ENCODE measurements at regions of chr20 and their contacts with region 1.

Region 1: DNA sequence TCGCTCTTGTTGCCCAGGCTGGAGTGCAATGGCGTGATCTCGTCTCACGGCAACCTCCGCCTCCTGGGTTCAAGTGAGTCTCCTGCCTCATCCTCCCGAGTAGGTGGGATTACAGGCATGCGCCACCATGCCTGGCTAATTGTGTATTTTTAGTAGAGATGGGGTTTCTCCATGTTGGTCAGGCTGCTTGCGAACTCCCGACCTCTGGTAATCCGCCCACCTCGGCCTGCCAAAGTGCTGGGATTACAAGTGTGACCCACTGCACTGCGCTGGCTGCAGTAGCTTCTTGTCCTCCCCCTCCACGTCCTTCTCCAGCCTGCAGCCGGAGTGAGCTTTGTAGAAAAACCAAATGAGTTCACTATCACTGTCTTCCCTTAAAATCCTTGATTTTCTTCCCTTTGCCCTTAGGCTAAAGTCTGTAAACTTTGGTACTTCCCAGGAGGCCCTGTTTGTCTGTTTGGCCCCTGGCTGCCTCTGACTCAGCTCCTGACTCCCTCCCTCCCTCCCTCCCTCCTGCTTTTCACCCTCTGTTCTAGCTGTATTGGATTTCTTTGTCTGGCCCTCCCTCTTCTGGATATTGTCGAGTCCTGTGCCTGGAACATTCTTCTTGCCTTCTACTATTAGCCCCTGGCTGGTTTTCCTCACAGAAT is 12.9 kb downstream of the PARD6B start:
- DNase-seq: peak; percentile 67 to 87
- ATAC-seq: peak; percentile 92 to 94 (median 93)
- H3K4me3 ChIP-seq: peak overlapping the region; percentile 26
- H3K27ac ChIP-seq: peak overlapping the region; percentile 92
- H3K4me1 ChIP-seq: peaks cover 21% of the 10 kb centered on the region
- H3K27me3 ChIP-seq: no peaks in the 10 kb centered on the region
- CTCF ChIP-seq: peak; percentile 16

Region 2: DNA sequence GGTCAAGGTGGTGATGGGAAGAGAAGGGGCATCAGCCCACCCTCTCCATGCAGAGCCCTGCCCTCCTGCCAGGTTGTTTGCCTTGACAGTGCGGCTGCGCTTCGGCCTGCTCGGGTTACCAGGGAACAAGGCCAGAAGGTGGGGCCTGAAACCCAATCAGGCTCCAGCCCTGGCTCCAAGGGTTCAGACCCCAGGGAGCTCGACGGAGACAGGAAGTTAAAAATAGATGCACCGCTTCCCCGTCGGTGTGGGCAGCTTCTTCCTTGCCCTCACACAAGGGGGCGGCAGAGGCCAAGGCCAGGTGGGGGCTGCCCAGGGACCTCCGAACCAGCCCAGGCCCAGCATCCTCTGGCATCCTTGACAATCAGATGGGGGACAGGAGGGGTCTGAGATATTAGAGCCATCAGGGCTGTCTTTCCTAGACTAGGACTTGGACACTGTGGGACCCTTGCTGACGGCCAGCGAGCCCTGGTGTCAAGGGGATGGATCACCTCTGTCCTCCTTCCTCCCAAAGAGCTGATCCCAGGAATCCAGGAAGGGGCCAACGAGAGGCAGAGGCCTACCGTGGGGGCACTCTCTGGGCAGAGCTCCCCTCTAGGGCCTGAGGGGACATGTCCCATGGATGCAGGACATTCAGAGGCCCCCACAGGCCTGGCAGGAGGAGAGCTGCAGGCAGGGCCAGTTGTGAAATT is 118.1 kb before region 1 on chr20:
- intact Hi-C with region 1: loop called in 1 of 2 experiments (anchors 10 kb)
- DNase-seq: peak; percentile 71 to 86
- ATAC-seq: peak; percentile 68 to 82 (median 81)
- H3K4me3 ChIP-seq: no peak overlapping the region
- H3K27ac ChIP-seq: peak overlapping the region; percentile 50
- H3K4me1 ChIP-seq: peaks cover 9% of the 10 kb centered on the region
- H3K27me3 ChIP-seq: no peaks in the 10 kb centered on the region
- CTCF ChIP-seq: peak; percentile 52

Region 3: DNA sequence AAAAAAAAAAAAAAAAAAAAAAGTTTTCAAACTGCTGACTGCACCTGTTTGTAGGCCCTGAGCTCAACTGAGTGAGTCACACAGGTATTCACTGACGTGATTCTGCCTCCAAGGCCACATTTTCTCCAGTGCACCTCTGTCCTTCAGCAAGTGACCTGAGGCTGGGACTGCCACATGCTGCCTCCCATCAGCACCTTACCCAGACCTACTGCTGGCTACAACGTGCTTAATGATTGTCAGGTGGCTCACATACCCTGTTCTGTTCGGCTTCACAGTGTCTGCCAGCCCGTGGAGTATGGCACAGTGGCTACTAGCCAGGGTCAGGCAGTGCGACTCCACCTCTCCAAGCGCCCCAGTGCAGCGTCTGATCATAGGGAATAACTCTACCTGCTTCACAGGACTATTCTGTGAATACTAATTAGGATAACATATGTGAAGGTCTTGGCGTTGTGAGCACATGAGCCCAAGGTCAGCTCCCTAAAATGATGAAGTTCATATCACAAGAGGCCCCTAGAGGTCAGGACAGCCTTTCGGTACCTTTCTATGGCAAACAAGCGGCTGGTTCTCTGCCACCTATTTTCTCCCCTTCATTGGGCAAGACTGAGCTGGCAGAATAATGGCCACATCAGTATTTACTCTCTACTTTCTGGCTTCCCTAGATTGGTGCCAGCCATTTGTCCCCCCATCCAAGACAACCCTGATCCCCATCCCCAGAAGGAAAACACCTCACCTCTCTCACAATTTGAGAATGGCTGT is 81.0 kb before region 1 on chr20:
- intact Hi-C with region 1: loop called (anchors 5 kb)
- DNase-seq: no peak
- ATAC-seq: peak; percentile 27 to 78 (median 50)
- H3K4me3 ChIP-seq: no peak overlapping the region
- H3K27ac ChIP-seq: no peak overlapping the region
- H3K4me1 ChIP-seq: peaks cover 13% of the 10 kb centered on the region
- H3K27me3 ChIP-seq: no peaks in the 10 kb centered on the region
- CTCF ChIP-seq: no peak

Region 4: GRCh38 chr20:50776122-50776817 is 32.0 kb after region 1 on chr20:
- intact Hi-C with region 1: no loop called
- DNase-seq: no peak
- ATAC-seq: no peak
- H3K4me3 ChIP-seq: no peak overlapping the region
- H3K27ac ChIP-seq: no peak overlapping the region
- H3K4me1 ChIP-seq: no peaks in the 10 kb centered on the region
- H3K27me3 ChIP-seq: peaks cover 0 to 11% (median 0%) of the 10 kb centered on the region in 3 donors
- CTCF ChIP-seq: no peak

Region 5: GRCh38 chr20:50885781-50886486 is 141.7 kb after region 1 on chr20:
- intact Hi-C with region 1: no loop called
- DNase-seq: no peak
- ATAC-seq: peak in 2 of 4 donors; percentile 14 to 23
- H3K4me3 ChIP-seq: no peak overlapping the region
- H3K27ac ChIP-seq: no peak overlapping the region
- H3K4me1 ChIP-seq: no peaks in the 10 kb centered on the region
- H3K27me3 ChIP-seq: no peaks in the 10 kb centered on the region
- CTCF ChIP-seq: no peak

Measured in psoas muscle (tissue), 8 donors.